Natural killer cell (primary cell): ENCODE measurements at regions of chr20 and their contacts with region 1.

Region 1: GRCh38 chr20:49668181-49668877 is 45.3 kb downstream of the B4GALT5 start:
- DNase-seq: peak; percentile 84 to 92
- ATAC-seq: peak; percentile 91 to 95 (median 92)
- H3K4me3 ChIP-seq: peak overlapping the region; percentile 16
- H3K4me3 Mint-ChIP-seq: peak overlapping the region; percentile 83
- H3K27ac ChIP-seq: peak overlapping the region; percentile 84
- H3K27ac Mint-ChIP-seq: peak overlapping the region in 1 of 2 donors; percentile 92
- H3K4me1 ChIP-seq: peaks cover 27% of the 10 kb centered on the region
- H3K4me1 Mint-ChIP-seq: peaks cover 56 to 79% of the 10 kb centered on the region in 2 donors
- H3K27me3 ChIP-seq: no peaks in the 10 kb centered on the region
- H3K27me3 Mint-ChIP-seq: no peaks in the 10 kb centered on the region
- CTCF ChIP-seq: no peak

Region 2: DNA sequence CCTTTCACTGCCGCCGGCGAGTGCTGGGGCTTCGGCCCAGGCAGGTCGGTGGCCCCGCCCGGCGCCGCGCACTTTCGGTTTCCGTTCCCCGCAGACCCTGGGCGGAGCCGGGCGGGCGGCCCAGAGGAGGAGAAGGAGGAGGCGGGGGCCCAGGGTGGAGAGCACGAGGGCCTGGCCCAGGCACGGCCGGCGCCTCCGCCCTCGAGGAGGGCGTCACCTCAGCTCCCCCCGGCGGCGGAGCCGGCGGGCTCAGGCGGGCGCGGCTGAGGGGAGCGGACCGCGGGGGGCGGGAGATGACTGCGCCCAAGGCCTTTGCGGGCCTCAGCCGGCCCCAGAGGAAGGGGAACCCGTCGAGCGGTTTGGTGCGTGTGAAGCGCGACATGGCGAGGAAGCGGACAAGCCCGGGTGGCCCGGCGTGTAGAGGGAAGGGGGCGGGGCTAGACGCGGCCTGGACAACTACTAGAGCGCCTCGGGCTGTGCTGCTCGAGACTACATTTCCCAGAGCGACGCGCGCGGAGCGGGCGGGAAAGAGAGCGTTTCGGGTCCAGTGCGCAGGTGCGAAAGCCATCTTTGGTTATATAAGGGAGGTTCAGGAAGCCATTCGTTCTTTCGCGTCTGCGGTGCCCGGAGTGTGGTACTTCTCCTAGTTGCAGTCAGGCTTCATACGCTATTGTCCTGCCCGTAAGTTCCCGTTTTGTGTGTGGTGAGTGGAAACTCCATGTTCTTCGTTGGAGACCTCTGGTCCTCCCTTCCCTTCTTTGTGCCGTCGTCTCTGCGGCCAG is 390.1 kb before region 1 on chr20 and contains the start of gene ZNFX1:
- intact Hi-C with region 1: loop called (anchors 10 kb)
- DNase-seq: peak; percentile 97 to 99
- ATAC-seq: peak; percentile 83 to 95 (median 86)
- H3K4me3 ChIP-seq: peak within 1 kb of the TSS; percentile 76
- H3K4me3 Mint-ChIP-seq: peak within 1 kb of the TSS; percentile 97
- H3K27ac ChIP-seq: peak within 1 kb of the TSS; percentile 90
- H3K27ac Mint-ChIP-seq: peak within 1 kb of the TSS; percentile 94 to 95
- H3K4me1 ChIP-seq: peaks cover 58% of the 10 kb centered on the region
- H3K4me1 Mint-ChIP-seq: peaks cover 69 to 81% of the 10 kb centered on the region in 2 donors
- H3K27me3 ChIP-seq: no peaks in the 10 kb centered on the region
- H3K27me3 Mint-ChIP-seq: no peaks in the 10 kb centered on the region
- CTCF ChIP-seq: no peak
- total RNA-seq, gene ZNFX1: 55.8 to 58.5 (median 57.8) TPM

Region 3: DNA sequence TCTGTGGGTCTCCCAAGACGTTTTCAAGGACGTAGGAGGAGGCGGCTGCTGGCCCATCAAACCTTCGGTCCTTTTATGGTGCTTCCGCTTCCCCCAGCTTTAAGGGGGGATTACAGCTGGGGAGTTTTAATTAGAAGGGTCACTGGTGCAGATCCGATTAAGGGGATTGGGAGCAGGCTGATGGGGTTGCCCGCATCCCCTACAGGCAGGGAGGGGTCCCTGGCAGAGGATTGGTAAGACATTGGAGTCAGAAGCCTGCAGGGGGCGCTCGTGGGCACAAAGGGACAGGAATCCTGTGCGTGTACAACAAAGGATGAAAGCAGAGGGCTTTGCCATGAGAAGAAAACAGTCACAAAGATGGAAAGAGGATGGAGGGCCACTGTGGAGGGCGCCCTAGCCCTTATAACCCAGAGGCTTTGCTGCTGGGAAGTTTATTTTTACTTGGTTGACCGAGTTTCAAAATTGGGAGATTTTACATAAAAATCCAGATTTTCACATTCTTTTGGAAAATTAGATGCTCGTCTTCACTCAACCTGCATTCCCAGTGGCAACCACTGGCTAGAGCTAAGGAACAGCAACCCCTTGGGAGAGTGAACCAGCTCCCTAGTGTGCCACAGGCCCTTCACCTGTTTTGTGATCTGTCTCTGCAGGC is 283.8 kb before region 1 on chr20:
- intact Hi-C with region 1: no loop called
- DNase-seq: peak; percentile 60 to 67
- ATAC-seq: peak; percentile 42 to 70 (median 57)
- H3K4me3 ChIP-seq: no peak overlapping the region
- H3K4me3 Mint-ChIP-seq: no peak overlapping the region
- H3K27ac ChIP-seq: no peak overlapping the region
- H3K27ac Mint-ChIP-seq: no peak overlapping the region
- H3K4me1 ChIP-seq: no peaks in the 10 kb centered on the region
- H3K4me1 Mint-ChIP-seq: peaks cover 0 to 5% of the 10 kb centered on the region in 2 donors
- H3K27me3 ChIP-seq: peaks cover 5% of the 10 kb centered on the region
- H3K27me3 Mint-ChIP-seq: peaks cover 23 to 24% of the 10 kb centered on the region in 2 donors
- CTCF ChIP-seq: peak; percentile 70

Region 4: GRCh38 chr20:49713753-49714712 is 45.7 kb after region 1 on chr20 and contains the start of gene B4GALT5:
- intact Hi-C with region 1: loop called (anchors 2 kb)
- DNase-seq: peak; percentile 76 to 82
- ATAC-seq: peak; percentile 86 to 93 (median 90)
- H3K4me3 ChIP-seq: peak within 1 kb of the TSS; percentile 93
- H3K4me3 Mint-ChIP-seq: peak within 1 kb of the TSS; percentile 93
- H3K27ac ChIP-seq: peak within 1 kb of the TSS; percentile 81
- H3K27ac Mint-ChIP-seq: peak within 1 kb of the TSS; percentile 86 to 93
- H3K4me1 ChIP-seq: peaks cover 20% of the 10 kb centered on the region
- H3K4me1 Mint-ChIP-seq: peaks cover 42 to 45% of the 10 kb centered on the region in 2 donors
- H3K27me3 ChIP-seq: no peaks in the 10 kb centered on the region
- H3K27me3 Mint-ChIP-seq: no peaks in the 10 kb centered on the region
- CTCF ChIP-seq: no peak
- total RNA-seq, gene B4GALT5: 15.5 to 29.1 (median 28.6) TPM

Region 5: GRCh38 chr20:49775229-49775693 is 106.9 kb after region 1 on chr20:
- intact Hi-C with region 1: loop called (anchors 2 kb)
- DNase-seq: no peak
- ATAC-seq: no peak
- H3K4me3 ChIP-seq: no peak overlapping the region
- H3K4me3 Mint-ChIP-seq: no peak overlapping the region
- H3K27ac ChIP-seq: no peak overlapping the region
- H3K27ac Mint-ChIP-seq: peak overlapping the region in 1 of 2 donors; percentile 81
- H3K4me1 ChIP-seq: peaks cover 16% of the 10 kb centered on the region
- H3K4me1 Mint-ChIP-seq: peaks cover 9 to 17% of the 10 kb centered on the region in 2 donors
- H3K27me3 ChIP-seq: no peaks in the 10 kb centered on the region
- H3K27me3 Mint-ChIP-seq: no peaks in the 10 kb centered on the region
- CTCF ChIP-seq: no peak

Region 6: DNA sequence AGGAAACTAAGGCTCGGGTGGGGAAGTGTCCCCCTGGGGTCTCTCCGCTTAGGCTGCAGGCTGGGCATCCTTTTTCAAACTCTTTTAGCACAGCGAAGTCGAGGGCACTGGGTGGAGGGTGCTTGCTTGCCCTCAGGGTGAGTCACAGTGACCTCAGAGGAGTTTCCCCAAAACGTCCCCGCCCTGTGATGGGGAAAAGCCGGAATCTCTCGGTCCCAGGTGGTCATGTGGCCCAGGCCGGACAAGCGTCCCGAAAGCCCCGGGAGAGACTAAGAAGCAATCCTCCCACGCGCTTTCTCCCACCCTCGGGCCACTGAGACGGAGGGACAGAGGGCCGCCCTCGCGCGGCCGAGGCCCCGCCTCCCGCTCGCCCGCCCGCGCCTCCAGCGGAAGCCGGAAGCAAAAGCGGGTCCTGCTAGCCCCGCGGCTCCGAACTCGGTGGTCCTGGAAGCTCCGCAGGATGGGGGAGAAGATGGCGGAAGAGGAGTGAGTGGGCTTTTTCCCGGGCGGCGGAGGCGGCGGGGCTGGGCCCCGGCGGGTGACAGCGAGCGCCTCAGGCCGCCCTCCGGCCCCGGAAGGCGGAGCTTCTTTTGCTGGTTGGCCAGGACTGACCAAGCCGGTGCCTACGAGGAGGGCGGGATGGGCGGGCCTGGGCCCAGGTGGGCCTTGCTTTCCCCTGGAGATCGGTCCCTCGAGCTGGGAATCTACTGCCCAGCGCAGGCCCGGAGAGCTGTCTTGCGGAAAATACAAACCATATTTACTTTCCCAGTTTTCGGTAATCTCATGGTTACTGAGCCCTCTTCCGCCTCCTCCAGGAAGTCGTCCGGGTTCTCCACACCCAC is 144.4 kb after region 1 on chr20 and contains the start of gene SLC9A8:
- intact Hi-C with region 1: loop called (anchors 2 kb)
- DNase-seq: peak; percentile 85 to 94
- ATAC-seq: peak; percentile 88 to 94 (median 91)
- H3K4me3 ChIP-seq: peak within 1 kb of the TSS; percentile 65
- H3K4me3 Mint-ChIP-seq: peak within 1 kb of the TSS; percentile 94
- H3K27ac ChIP-seq: peak within 1 kb of the TSS; percentile 91
- H3K27ac Mint-ChIP-seq: peak within 1 kb of the TSS; percentile 85 to 93
- H3K4me1 ChIP-seq: peaks cover 17% of the 10 kb centered on the region
- H3K4me1 Mint-ChIP-seq: peaks cover 35 to 36% of the 10 kb centered on the region in 2 donors
- H3K27me3 ChIP-seq: no peaks in the 10 kb centered on the region
- H3K27me3 Mint-ChIP-seq: no peaks in the 10 kb centered on the region
- CTCF ChIP-seq: peak; percentile 8
- total RNA-seq, gene SLC9A8: 54.5 to 68.7 (median 58.8) TPM

Region 7: GRCh38 chr20:50115591-50116372 is 447.5 kb after region 1 on chr20:
- intact Hi-C with region 1: loop called (anchors 10 kb)
- DNase-seq: peak; percentile 75 to 94
- ATAC-seq: peak; percentile 69 to 85 (median 76)
- H3K4me3 ChIP-seq: peak overlapping the region; percentile 26
- H3K4me3 Mint-ChIP-seq: peak overlapping the region; percentile 94
- H3K27ac ChIP-seq: no peak overlapping the region
- H3K27ac Mint-ChIP-seq: peak overlapping the region; percentile 89 to 92
- H3K4me1 ChIP-seq: peaks cover 40% of the 10 kb centered on the region
- H3K4me1 Mint-ChIP-seq: peaks cover 52% of the 10 kb centered on the region in 2 donors
- H3K27me3 ChIP-seq: no peaks in the 10 kb centered on the region
- H3K27me3 Mint-ChIP-seq: no peaks in the 10 kb centered on the region
- CTCF ChIP-seq: no peak